Activated T-helper 1 cell treated with anti-CD3 and anti-CD28 coated beads, Interleukin-12 subunit alpha, Interleukin-12 subunit beta, Interleukin-2, Interleukin-4 antibody, amounts not matched to agents 30 ng/mL and 10 ng/mL and 1 ng/mL, durations not matched to agents 14 hours and 24 hours and 36 hours (primary cell): ENCODE measurements at regions of chr2 and their contacts with region 1.

Region 1: GRCh38 chr2:39436592-39437510 is at the start of gene MAP4K3:
- DNase-seq: peak; percentile 65
- H3K4me3 Mint-ChIP-seq: peak within 1 kb of the TSS; percentile 96
- H3K27ac Mint-ChIP-seq: peak within 1 kb of the TSS; percentile 86
- H3K4me1 Mint-ChIP-seq: peaks cover 51% of the 10 kb centered on the region
- H3K27me3 Mint-ChIP-seq: no peaks in the 10 kb centered on the region
- total RNA-seq, gene MAP4K3: 15.7 and 24.1 TPM in 2 replicates

Region 2: GRCh38 chr2:39408316-39409136 is 28.3 kb before region 1 on chr2:
- intact Hi-C with region 1: no loop called
- DNase-seq: no peak
- H3K4me3 Mint-ChIP-seq: no peak overlapping the region
- H3K27ac Mint-ChIP-seq: peak overlapping the region; percentile 54
- H3K4me1 Mint-ChIP-seq: peaks cover 39% of the 10 kb centered on the region
- H3K27me3 Mint-ChIP-seq: no peaks in the 10 kb centered on the region

Region 3: DNA sequence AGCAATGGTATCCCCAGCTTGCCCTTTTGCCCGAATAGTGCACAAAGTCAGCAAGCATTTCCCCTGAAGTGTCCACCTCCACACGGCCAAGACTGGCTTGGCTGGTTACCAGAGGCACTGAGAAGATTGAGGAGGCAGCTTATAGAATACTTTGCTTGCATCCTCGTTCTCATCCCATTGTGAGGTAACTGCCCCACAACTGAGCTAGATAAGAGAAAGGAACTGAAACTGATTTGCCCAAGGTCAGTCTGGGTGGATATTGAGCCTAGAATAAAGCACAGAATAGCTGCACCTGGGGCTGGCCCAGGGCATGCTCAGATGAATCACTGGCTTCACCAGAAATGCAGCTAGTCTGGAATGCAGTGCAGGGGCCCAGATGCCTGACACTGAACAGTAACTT is 33.0 kb after region 1 on chr2:
- intact Hi-C with region 1: loop called (anchors 2 kb)
- DNase-seq: no peak
- H3K4me3 Mint-ChIP-seq: no peak overlapping the region
- H3K27ac Mint-ChIP-seq: no peak overlapping the region
- H3K4me1 Mint-ChIP-seq: peaks cover 12% of the 10 kb centered on the region
- H3K27me3 Mint-ChIP-seq: peaks cover 6% of the 10 kb centered on the region

Region 4: DNA sequence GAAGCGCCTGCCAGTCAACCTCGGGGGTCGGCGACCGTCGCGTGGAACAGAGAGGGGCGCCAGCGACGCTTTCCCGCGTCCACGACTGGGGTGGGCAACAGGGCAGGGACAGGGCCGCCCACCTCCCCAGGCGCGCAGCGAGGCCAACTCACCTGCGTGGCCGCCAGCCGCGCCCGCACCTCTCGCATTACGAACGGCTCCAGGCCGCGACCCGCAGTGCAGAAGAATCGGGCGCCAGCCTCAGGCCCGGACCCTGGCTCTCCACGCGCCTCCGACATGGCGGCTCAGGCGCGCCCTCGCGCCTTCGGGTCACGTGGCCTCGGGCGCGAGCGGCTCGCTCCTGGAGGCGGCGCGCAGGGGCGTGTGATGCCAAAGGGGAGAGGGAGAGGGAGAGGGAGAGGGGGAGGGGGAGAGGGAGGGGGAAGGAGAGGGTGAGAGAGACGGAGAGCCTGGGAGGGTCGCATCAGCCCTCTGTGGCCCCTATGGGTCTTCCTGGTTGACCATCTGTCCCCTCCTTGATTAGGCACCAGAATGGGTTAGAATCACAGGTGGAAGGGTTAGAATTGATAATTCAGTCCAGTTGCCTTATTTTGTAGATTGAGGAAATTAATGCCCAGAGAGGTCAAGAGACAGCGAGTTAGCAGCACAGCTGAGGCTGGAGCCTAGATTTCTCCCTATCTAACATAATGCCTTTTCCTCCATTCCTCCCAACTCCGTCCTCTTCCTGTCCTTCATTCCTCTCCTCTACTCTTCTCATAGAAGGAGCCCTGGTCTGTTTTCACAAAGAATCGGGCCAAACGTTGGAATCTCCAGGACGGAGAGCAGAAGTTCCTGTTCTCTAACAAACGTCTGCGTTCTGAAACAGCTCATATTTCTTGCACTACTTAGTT is 342.4 kb after region 1 on chr2 and contains the start of gene THUMPD2:
- intact Hi-C with region 1: loop called (anchors 1 kb)
- DNase-seq: peak; percentile 67
- H3K4me3 Mint-ChIP-seq: peak within 1 kb of the TSS; percentile 94
- H3K27ac Mint-ChIP-seq: peak within 1 kb of the TSS; percentile 95
- H3K4me1 Mint-ChIP-seq: peaks cover 49% of the 10 kb centered on the region
- H3K27me3 Mint-ChIP-seq: peaks cover 5% of the 10 kb centered on the region
- total RNA-seq, gene THUMPD2: 21.2 and 21.6 TPM in 2 replicates